Dendritic cell treated with granulocyte-macrophage colony-stimulating factor and Interleukin-4, amounts not matched to agents 40 ng/mL and 50 ng/mL, for 4 days (primary cell): ENCODE measurements at regions of chr19 and their contacts with region 1.

Region 1: DNA sequence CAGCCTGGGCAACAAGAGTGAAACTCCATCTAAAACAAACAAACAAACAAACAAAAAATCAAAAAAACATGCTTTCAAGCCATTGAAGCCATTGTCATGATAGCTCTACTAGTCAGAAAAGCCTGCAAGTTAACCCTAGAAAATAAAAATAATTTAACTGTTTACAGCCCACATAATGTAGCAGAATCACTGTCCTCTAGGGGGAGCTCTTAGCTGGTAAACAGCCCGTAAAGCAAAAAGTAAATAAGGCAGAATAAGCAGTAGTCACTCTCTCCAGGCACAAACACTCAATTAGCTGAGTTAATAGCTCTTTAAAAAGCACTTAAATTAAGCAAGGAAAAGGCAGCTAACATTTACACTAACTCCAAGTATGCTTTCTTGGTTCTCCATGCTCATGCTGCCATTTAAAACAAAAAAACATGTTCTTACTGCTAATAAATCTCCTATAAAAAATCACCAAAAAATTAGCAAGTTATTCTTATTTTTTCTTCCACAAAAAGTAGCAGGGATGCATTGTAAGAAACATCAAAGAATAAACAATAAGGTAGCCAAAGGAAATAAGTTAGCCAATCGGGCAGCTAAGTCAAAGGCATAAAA is 11.3 kb downstream of the LILRB4 start:
- H3K4me3 Mint-ChIP-seq: no peak overlapping the region
- H3K27ac Mint-ChIP-seq: no peak overlapping the region
- H3K4me1 Mint-ChIP-seq: peaks cover 45% of the 10 kb centered on the region
- H3K27me3 Mint-ChIP-seq: peaks cover 30% of the 10 kb centered on the region

Region 2: GRCh38 chr19:54481322-54481930 is 192.7 kb before region 1 on chr19:
- intact Hi-C with region 1: loop called (anchors 2 kb)
- H3K4me3 Mint-ChIP-seq: no peak overlapping the region
- H3K27ac Mint-ChIP-seq: no peak overlapping the region
- H3K4me1 Mint-ChIP-seq: peaks cover 65% of the 10 kb centered on the region
- H3K27me3 Mint-ChIP-seq: peaks cover 82% of the 10 kb centered on the region

Region 3: GRCh38 chr19:54600212-54600611 is 73.9 kb before region 1 on chr19:
- intact Hi-C with region 1: loop called (anchors 2 kb)
- H3K4me3 Mint-ChIP-seq: no peak overlapping the region
- H3K27ac Mint-ChIP-seq: no peak overlapping the region
- H3K4me1 Mint-ChIP-seq: peaks cover 44% of the 10 kb centered on the region
- H3K27me3 Mint-ChIP-seq: peaks cover 8% of the 10 kb centered on the region

Region 4: GRCh38 chr19:54653181-54653809 is 20.8 kb before region 1 on chr19:
- intact Hi-C with region 1: loop called (anchors 1 kb)
- H3K4me3 Mint-ChIP-seq: no peak overlapping the region
- H3K27ac Mint-ChIP-seq: no peak overlapping the region
- H3K4me1 Mint-ChIP-seq: peaks cover 55% of the 10 kb centered on the region
- H3K27me3 Mint-ChIP-seq: peaks cover 15% of the 10 kb centered on the region

Region 5: DNA sequence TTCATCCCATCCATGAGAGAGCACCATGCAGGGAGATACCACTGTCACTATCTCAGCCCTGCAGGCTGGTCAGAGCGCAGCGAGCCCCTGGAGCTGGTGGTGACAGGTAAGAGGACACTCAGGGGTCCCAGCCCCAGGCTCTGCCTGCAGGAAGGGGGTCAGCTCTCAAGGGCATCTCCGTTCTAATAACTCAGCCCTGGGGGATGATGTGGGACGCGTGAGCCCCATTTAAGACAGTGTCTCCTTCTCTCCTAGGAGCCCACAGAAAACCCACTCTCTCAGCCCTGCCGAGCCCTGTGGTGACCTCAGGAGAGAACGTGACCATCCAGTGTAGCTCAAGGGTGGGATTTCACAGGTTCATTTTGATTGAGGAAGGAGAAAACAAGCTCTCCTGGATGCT is 34.7 kb after region 1 on chr19:
- intact Hi-C with region 1: no loop called
- H3K4me3 Mint-ChIP-seq: no peak overlapping the region
- H3K27ac Mint-ChIP-seq: no peak overlapping the region
- H3K4me1 Mint-ChIP-seq: peaks cover 5% of the 10 kb centered on the region
- H3K27me3 Mint-ChIP-seq: peaks cover 46% of the 10 kb centered on the region

Region 6: DNA sequence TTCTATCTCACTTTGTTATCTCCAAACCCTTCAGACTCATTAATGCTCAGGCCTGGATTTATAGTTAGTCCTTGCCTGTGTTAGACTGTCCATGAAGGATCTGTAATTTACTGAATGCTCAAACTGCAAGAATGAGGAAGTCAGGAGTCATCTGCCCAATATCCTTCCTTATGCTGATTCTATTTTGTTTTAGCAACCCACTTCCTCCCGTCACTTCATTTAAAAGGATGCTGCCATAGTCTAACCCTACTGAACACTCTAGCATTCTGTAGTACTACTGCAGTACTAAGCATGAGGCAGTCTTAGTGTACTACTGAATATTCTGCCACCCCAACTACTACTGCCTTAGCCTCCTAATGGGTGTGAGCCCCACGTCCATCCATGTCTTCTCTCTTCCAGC is 201.4 kb after region 1 on chr19:
- intact Hi-C with region 1: loop called (anchors 10 kb)
- H3K4me3 Mint-ChIP-seq: peak overlapping the region; percentile 30
- H3K27ac Mint-ChIP-seq: peak overlapping the region; percentile 30
- H3K4me1 Mint-ChIP-seq: peaks cover 72% of the 10 kb centered on the region
- H3K27me3 Mint-ChIP-seq: no peaks in the 10 kb centered on the region